A549 (cell line): ENCODE measurements at regions of chr11 and their contacts with region 1.

Region 1: GRCh38 chr11:13962562-13963168 is at the start of gene SPON1:
- DNase-seq: no peak
- ATAC-seq: no peak
- H3K4me3 ChIP-seq: no peak within 1 kb of the TSS
- H3K27ac ChIP-seq: no peak within 1 kb of the TSS
- H3K4me1 ChIP-seq: peaks cover 6% of the 10 kb centered on the region; the same call in 1 of the 3 replicates
- CTCF ChIP-seq: no peak
- EP300 ChIP-seq: no peak
- POLR2A ChIP-seq: no peak
- RAD21 ChIP-seq: no peak
- polyA plus RNA-seq, gene SPON1: not detected in 2 replicates

Region 2: GRCh38 chr11:13931356-13931755 is 31.3 kb before region 1 on chr11:
- CTCF ChIA-PET with region 1: no interaction called
- POLR2A ChIA-PET with region 1: no interaction called
- DNase-seq: no peak
- ATAC-seq: no peak
- H3K4me3 ChIP-seq: no peak overlapping the region
- H3K27ac ChIP-seq: no peak overlapping the region
- H3K4me1 ChIP-seq: peaks cover 8% of the 10 kb centered on the region; the same call in 1 of the 3 replicates
- CTCF ChIP-seq: no peak
- EP300 ChIP-seq: no peak
- POLR2A ChIP-seq: no peak
- RAD21 ChIP-seq: no peak

Region 3: DNA sequence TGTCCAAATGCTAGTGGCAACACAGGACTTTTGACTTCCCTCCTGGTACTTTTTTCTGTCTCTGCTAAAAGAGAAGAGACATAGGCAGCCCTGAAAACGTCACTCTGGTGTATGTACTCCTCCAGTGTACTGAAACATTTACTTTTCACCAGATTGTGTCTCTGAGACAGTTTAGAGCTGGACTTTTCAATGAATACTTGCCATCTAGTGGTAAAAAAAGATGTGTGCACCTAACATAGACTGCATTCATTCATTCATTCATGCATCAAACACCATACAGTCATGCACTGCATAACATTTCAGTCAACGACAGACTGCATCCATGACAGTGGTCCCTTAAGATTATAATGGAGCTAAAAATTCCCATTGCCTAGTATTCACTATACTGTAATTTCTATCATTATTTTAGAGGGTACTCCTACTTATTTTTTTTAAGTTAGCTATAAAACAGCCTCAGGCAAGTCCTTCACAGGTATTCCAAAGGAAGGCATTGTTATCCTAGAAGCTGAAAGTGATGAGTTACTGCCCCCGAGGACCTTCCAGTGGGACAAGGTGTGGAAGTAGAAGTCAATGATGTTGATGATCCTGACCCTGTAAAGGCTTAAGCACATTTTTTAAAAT is 186.1 kb after region 1 on chr11:
- CTCF ChIA-PET with region 1: interaction called, 97 read pairs
- POLR2A ChIA-PET with region 1: no interaction called
- DNase-seq: peak; percentile 10 to 46
- ATAC-seq: peak; percentile 88 to 93
- H3K4me3 ChIP-seq: no peak overlapping the region
- H3K27ac ChIP-seq: no peak overlapping the region
- H3K4me1 ChIP-seq: no peaks in the 10 kb centered on the region
- CTCF ChIP-seq: peak; percentile 58
- EP300 ChIP-seq: no peak
- POLR2A ChIP-seq: no peak
- RAD21 ChIP-seq: peak; percentile 67 to 68